Activated T-helper 2 cell treated with anti-CD3 and anti-CD28 coated beads, Interferon-gamma antibody, Interleukin-2, Interleukin-4, amounts not matched to agents 10 μg/mL and 5 μg/mL and 100 μg/mL, durations not matched to agents 14 hours and 24 hours and 36 hours (primary cell): ENCODE measurements at regions of chr12 and their contacts with region 1.

Region 1: GRCh38 chr12:49698619-49699545 is 8.3 kb downstream of the FMNL3 start:
- DNase-seq: peak; percentile 16
- H3K4me3 Mint-ChIP-seq: peak overlapping the region; percentile 56
- H3K27ac Mint-ChIP-seq: peak overlapping the region; percentile 86
- H3K4me1 Mint-ChIP-seq: peaks cover 42% of the 10 kb centered on the region
- H3K27me3 Mint-ChIP-seq: no peaks in the 10 kb centered on the region

Region 2: GRCh38 chr12:49662998-49663843 is 35.7 kb before region 1 on chr12:
- intact Hi-C with region 1: loop called (anchors 1 kb)
- DNase-seq: peak; percentile 65
- H3K4me3 Mint-ChIP-seq: peak overlapping the region; percentile 66
- H3K27ac Mint-ChIP-seq: peak overlapping the region; percentile 91
- H3K4me1 Mint-ChIP-seq: peaks cover 59% of the 10 kb centered on the region
- H3K27me3 Mint-ChIP-seq: no peaks in the 10 kb centered on the region

Region 3: DNA sequence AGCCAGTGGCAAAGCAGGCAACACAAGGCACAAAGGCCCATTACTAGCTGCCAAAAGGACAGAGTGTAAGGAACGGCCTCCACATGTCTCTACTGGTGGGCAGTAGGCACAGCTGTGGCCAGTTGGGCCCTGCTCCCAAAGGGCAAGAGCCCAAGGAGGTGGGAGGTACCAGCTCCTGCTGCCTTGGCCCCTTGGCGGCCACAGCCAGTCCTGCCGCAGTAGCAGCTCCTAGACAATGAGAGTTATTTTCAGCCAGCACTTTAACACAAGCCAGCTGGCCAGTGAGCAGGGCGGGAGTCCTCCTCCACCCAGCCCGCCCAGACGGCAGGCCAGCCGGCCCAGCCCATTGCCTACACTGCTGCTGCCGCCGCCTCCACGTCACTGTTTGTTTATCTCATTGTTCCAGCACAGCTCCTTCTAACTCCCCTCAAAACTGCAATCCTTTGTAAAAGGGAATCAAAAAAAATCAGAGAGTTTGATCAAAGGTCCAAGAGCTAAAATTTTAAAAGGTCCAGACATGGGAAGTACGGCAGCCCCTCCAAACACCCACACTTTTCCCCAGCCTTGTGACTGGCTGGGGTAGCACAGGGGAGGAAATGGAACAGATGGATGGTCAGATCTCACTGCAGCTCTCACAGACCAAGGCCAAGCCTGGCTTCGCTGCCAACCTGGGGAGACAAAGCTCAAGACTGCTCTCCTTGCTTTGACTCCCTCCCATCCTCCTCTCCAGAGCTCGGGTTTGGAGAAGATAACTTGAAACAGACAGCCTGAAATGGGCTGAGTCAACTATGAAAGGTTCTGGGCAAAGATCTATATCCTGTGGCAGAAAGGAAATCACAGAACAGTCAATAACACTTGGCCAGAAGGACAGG is 25.2 kb before region 1 on chr12:
- intact Hi-C with region 1: loop called (anchors 1 kb)
- DNase-seq: no peak
- H3K4me3 Mint-ChIP-seq: peak overlapping the region; percentile 31
- H3K27ac Mint-ChIP-seq: peak overlapping the region; percentile 71
- H3K4me1 Mint-ChIP-seq: peaks cover 74% of the 10 kb centered on the region
- H3K27me3 Mint-ChIP-seq: no peaks in the 10 kb centered on the region